Endothelial cell of umbilical vein (primary cell): ENCODE measurements at regions of chr4 and their contacts with region 1.

Region 1: GRCh38 chr4:26330186-26330787 is 9.5 kb downstream of the RBPJ start:
- DNase-seq: peak; percentile 74
- H3K4me3 ChIP-seq: no peak overlapping the region
- H3K27ac ChIP-seq: no peak overlapping the region
- H3K4me1 ChIP-seq: no peaks in the 10 kb centered on the region
- H3K27me3 ChIP-seq: no peaks in the 10 kb centered on the region
- CTCF ChIP-seq: peak; percentile 21 to 56
- POLR2A ChIP-seq: no peak

Region 2: DNA sequence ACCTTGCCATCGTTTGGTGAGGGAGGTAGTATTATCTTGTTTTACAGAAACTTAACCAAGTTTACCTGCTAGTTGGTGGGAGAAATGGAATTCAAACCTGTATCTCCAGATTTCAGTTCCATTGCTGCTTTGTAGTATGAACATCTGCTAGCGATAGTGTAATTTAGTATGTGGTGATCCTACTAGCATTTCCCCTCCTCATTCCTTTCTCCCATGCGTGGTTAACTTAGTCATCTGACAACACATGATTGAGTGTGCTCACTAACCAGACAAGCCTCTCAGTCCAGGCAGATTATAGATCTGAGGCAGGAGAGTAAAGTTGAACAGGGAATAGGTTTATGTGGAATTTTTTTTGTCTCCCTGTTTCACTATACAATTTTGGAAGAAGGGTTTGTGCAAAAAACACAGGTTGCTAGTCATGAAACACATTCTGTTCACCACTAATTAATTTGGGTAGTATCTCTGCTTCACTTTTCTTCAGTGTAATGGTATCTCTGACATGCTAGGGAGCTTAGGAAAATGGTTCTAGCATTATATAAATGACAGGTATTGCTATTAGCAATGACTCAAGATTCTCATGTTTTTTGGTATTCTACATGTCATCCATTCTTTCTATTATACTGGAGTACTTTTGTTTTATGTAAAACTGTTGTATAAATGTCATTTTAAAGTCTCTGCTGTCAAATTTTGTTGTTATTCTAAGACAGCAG is 12.2 kb after region 1 on chr4:
- CTCF ChIA-PET with region 1: interaction called, 81 read pairs
- POLR2A ChIA-PET with region 1: no interaction called
- dilution Hi-C with region 1: no loop called
- intact Hi-C with region 1: no loop called
- DNase-seq: peak; percentile 35
- H3K4me3 ChIP-seq: no peak overlapping the region
- H3K27ac ChIP-seq: no peak overlapping the region
- H3K4me1 ChIP-seq: peaks cover 8% of the 10 kb centered on the region
- H3K27me3 ChIP-seq: no peaks in the 10 kb centered on the region
- CTCF ChIP-seq: no peak
- POLR2A ChIP-seq: no peak

Region 3: DNA sequence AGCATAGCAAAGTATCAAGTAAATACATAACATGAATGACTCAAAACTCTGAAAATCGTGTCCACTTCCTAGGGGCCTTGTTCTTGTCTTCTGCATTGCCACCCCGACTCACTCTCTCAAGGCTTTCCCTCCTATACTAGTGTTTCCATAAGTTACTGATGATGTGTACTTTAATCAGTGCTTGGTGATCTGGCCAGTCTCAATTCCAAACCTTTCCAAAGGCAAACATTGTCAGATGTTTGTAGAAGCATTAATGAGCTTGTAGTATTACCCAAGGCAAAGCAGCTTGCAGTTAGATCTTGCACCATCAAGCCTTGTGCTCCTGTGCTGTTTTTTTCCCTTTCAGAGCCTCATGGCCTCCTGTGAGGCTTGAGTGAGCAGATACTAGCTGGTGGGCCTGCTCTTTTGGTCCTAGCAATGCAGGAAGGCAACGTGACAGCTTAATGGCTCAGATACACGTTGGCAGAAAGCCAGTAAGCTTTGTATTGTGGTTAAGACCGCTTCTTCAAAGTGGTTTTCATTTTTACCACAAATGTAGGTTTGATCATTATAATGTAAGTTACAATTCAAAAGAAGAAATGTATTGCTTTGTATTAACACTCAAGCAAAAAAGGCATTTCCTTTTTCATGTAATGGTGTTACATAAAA is 42.4 kb after region 1 on chr4:
- CTCF ChIA-PET with region 1: interaction called, 15 read pairs
- POLR2A ChIA-PET with region 1: interaction called, 3 read pairs
- dilution Hi-C with region 1: no loop called
- intact Hi-C with region 1: no loop called
- DNase-seq: peak; percentile 68
- H3K4me3 ChIP-seq: no peak overlapping the region
- H3K27ac ChIP-seq: no peak overlapping the region
- H3K4me1 ChIP-seq: no peaks in the 10 kb centered on the region
- H3K27me3 ChIP-seq: no peaks in the 10 kb centered on the region
- CTCF ChIP-seq: no peak
- POLR2A ChIP-seq: no peak

Region 4: DNA sequence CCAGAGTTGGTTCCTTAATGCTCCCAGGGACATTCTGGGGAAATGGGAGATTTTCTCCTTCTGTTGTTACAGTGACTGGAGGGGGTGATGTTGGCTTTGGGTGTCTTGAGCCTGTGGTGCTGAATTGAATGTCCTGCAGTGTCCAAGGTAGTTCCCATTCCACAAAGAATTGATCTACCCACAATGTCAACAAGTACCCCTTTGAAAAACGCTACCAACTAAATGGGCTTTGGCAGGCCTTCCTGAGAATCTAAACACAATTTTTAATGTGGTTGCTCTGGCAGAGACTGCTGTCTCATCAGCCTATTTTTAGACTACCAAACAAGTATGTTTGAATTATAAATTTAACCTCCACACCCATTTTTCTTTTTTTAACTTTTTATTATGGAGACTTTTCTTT is 90.6 kb after region 1 on chr4:
- CTCF ChIA-PET with region 1: interaction called, 11 read pairs
- POLR2A ChIA-PET with region 1: no interaction called
- dilution Hi-C with region 1: no loop called
- intact Hi-C with region 1: no loop called
- DNase-seq: no peak
- H3K4me3 ChIP-seq: no peak overlapping the region
- H3K27ac ChIP-seq: no peak overlapping the region
- H3K4me1 ChIP-seq: no peaks in the 10 kb centered on the region
- H3K27me3 ChIP-seq: no peaks in the 10 kb centered on the region
- CTCF ChIP-seq: no peak
- POLR2A ChIP-seq: no peak

Region 5: GRCh38 chr4:27010334-27010940 is 680.1 kb after region 1 on chr4:
- CTCF ChIA-PET with region 1: interaction called, 17 read pairs
- POLR2A ChIA-PET with region 1: no interaction called
- dilution Hi-C with region 1: no loop called
- intact Hi-C with region 1: loop called (anchors 2 kb)
- DNase-seq: peak; percentile 77
- H3K4me3 ChIP-seq: no peak overlapping the region
- H3K27ac ChIP-seq: no peak overlapping the region
- H3K4me1 ChIP-seq: peaks cover 10% of the 10 kb centered on the region
- H3K27me3 ChIP-seq: no peaks in the 10 kb centered on the region
- CTCF ChIP-seq: peak; percentile 62 to 68
- POLR2A ChIP-seq: no peak

Region 6: DNA sequence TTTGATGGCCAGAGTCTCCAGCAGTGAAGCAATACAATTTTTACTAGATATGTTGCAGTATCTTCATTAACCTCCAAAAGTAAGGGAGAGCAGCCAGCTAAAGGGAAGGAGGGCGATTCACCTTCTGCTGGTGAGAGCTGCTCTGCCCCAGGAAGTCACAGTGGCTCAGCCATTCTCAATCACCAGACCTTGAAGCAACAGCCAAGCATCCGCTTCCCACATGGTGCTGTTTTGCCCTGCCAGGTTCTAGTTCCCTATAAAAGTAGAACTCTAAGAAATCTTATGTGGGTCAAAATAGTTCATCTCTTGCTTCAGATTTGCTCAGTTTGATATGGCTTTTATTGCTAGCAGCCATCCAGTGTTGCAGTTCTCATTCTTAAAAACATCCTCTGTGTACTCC is 697.1 kb after region 1 on chr4:
- CTCF ChIA-PET with region 1: no interaction called
- POLR2A ChIA-PET with region 1: no interaction called
- dilution Hi-C with region 1: no loop called
- intact Hi-C with region 1: no loop called
- DNase-seq: no peak
- H3K4me3 ChIP-seq: no peak overlapping the region
- H3K27ac ChIP-seq: no peak overlapping the region
- H3K4me1 ChIP-seq: no peaks in the 10 kb centered on the region
- H3K27me3 ChIP-seq: no peaks in the 10 kb centered on the region
- CTCF ChIP-seq: no peak
- POLR2A ChIP-seq: no peak